Activated CD4-positive, alpha-beta T cell treated with anti-CD3 and anti-CD28 coated beads, Interleukin-2, amount 10 ng/mL, durations not matched to agents 24 days and 14 days (primary cell): ENCODE measurements at regions of chr14 and their contacts with region 1.

Region 1: DNA sequence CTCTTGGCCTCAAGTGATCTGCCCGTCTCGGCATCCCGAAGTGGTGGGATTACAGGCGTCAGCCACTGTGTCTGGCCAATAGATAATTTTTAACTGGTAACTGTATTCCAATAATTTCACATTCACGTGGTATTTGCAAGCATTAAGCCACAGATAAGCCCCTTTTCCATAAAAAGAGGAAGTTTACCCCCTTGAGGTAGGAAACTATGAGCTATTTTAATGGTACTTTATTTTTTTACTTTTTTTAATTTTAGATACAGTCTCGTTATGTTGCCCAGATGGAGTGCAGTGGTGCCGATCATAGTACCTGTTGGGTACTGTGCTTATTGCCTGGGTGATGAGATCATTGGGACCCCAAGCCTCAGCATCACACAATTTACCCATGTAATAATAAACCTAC is 42.9 kb upstream of the AP4S1 start:
- DNase-seq: no peak
- H3K4me3 Mint-ChIP-seq: no peak overlapping the region
- H3K27ac Mint-ChIP-seq: no peak overlapping the region
- H3K4me1 Mint-ChIP-seq: peaks cover 5% of the 10 kb centered on the region
- H3K27me3 Mint-ChIP-seq: no peaks in the 10 kb centered on the region

Region 2: GRCh38 chr14:31084385-31084784 is 101.9 kb after region 1 on chr14:
- intact Hi-C with region 1: loop called (anchors 1 kb)
- DNase-seq: no peak
- H3K4me3 Mint-ChIP-seq: no peak overlapping the region
- H3K27ac Mint-ChIP-seq: no peak overlapping the region
- H3K4me1 Mint-ChIP-seq: no peaks in the 10 kb centered on the region
- H3K27me3 Mint-ChIP-seq: no peaks in the 10 kb centered on the region